ENCODE measurements at regions of chr1 and their contacts with region 1.

Region 1: GRCh38 chr1:145978854-145979759 is 14.6 kb downstream of the POLR3GL start:
- DNase-seq: peak; percentile 95
- ATAC-seq: peak; percentile 85

Region 2: GRCh38 chr1:145845514-145846161 is 133.5 kb before region 1 on chr1 and contains the start of gene NUDT17:
- intact Hi-C with region 1: no loop called
- DNase-seq: peak; percentile 90
- ATAC-seq: peak; percentile 94
- total RNA-seq, gene NUDT17: 2.9 TPM

Region 3: DNA sequence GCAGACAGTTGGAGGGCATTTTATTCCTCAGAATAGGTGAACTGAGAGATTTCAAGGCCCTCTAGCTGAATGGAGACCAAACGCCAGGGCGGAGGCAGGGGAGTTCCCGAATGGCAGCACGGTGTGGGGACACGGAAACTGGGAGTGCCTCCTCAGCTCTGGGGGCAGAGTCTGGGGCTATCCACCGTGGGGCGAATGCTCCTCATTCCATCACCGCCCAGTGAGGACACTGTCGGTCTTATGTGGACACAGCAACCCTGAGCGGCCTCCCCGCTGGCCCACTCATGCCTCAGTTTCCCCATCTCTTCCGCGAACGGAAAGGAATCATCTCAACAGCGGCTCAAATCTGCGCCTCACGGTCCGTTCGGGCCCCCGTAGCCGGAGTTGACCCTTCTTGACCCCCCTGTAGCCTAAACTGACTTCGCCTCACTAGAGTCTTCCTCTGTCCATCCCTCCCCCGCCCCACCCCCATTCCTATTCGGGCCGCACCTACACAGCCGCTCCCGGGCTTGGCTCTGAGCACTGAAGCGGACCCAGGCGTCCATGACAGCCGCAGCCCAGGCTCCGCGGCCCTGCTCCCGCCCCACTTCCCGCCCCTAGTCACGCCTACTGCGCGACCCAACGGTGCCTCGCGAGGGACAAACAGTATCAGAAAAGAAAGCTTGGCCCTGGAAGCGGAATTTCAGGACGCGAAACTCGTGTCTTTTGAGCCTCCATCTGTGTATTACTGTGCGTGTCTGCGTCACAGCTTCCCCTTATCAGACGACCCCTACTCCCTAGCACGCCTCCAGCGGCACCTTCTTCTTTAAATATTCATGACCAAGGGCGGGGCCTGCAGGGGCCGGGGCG is 60.7 kb before region 1 on chr1 and contains the start of gene PEX11B:
- intact Hi-C with region 1: loop called (anchors 10 kb)
- DNase-seq: peak; percentile 93
- ATAC-seq: peak; percentile 97
- total RNA-seq, gene PEX11B: 22.3 TPM

Region 4: DNA sequence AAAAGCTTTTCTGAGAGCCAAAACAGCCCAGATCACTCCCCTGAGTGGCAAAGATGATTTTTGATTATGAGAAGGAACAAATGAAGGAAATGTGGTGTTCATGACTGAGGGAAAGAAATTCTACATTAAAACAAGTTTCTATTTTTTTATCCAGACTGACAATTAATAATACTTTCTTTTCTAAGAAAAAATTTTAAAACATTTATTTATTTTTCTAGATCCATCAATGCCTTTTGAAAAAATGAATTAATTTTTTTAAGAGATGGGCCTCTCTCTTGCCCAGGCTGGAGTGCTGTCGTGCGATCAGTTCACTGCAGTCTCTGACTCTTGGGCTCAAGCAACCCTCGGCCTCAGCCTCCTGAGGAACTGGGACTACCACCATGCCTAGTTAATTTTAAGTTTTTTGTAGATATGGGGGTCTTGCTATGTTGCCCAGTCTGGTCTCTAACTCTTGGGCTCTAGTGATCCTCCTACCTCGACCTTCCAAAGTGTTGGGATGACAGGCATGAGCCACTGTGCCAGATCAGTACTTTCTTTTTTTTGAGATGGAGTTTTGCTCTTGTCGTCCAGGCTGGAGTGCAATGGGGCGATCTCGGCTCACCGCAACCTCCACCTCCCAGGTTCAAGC is 28.5 kb after region 1 on chr1:
- intact Hi-C with region 1: loop called (anchors 2 kb)
- DNase-seq: no peak
- ATAC-seq: peak; percentile 27

Measured in Right ventricle myocardium superior (tissue), 1 donor.